GM12878 (cell line): ENCODE measurements at regions of chr5 and their contacts with region 1.

Region 1: DNA sequence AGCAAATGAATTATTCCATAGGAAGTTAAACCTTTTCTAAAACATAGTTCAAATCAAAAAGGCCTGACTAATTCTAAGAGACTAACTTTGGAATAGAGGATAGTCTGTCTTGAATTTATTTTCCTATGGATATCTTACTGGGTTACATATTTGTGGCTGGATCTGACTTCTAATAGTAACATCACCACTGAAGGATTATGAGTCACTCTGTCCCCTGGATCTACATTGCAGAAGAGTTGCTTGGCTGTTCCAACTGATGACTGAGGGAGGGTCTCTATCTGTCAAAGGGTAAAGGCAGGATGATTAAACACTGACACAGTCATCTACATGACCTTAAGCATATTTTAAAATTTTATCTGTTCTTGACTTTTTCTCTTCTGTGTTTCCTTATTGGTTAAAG is 119.6 kb upstream of the FST start:
- DNase-seq: no peak
- ATAC-seq: no peak
- H3K4me3 ChIP-seq: no peak overlapping the region
- H3K27ac ChIP-seq: no peak overlapping the region
- H3K4me1 ChIP-seq: no peaks in the 10 kb centered on the region
- H3K27me3 ChIP-seq: no peaks in the 10 kb centered on the region
- CTCF ChIP-seq: no peak
- EP300 ChIP-seq: no peak
- POLR2A ChIP-seq: no peak
- RAD21 ChIP-seq: no peak

Region 2: DNA sequence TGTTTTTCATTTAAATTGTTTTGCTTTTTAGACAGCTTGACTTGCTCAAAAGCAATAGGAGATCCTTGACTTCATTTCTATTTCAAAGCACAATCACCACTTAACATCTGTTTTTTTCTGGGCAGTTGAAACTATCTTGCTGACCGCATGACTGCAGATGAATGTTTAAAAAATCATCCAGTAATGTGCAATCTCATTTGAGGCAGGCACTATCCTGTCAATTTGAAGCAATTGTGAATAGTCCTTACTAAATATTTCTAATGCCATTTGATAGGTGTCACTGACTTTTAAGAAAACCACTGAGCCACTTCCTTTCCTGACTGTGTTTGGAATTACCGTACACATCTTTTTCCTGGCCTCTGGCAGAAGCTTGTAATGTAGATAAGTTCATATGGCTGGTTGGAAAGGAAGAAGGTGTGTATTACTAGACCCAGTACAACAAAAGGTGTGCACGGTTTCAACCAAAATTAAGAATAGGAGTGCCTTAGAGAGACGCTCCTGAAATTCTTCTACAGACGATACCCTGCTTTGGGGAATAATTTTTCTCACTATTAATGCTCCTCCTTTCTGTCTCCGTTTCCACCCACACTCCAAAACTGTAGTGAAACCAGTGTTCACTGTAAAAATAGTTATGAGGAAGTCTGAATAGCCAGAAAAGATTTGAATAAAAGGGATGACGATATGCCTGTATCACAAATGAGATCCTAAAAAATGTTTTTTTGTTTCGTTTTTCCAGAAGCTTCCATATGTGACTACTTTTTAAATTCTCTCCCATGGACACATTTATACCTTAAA is 114.6 kb before region 1 on chr5:
- CTCF ChIA-PET with region 1: no interaction called
- POLR2A ChIA-PET with region 1: no interaction called
- RAD21 ChIA-PET with region 1: no interaction called
- SMC1A ChIA-PET with region 1: no interaction called
- in situ Hi-C with region 1: no loop called
- intact Hi-C with region 1: no loop called
- DNase-seq: no peak
- ATAC-seq: no peak
- H3K4me3 ChIP-seq: no peak overlapping the region
- H3K27ac ChIP-seq: no peak overlapping the region
- H3K4me1 ChIP-seq: no peaks in the 10 kb centered on the region
- H3K27me3 ChIP-seq: no peaks in the 10 kb centered on the region
- CTCF ChIP-seq: no peak
- EP300 ChIP-seq: no peak
- POLR2A ChIP-seq: no peak
- RAD21 ChIP-seq: no peak

Region 3: GRCh38 chr5:53323943-53324642 is 36.7 kb before region 1 on chr5:
- CTCF ChIA-PET with region 1: interaction called, 3 read pairs
- POLR2A ChIA-PET with region 1: no interaction called
- RAD21 ChIA-PET with region 1: no interaction called
- SMC1A ChIA-PET with region 1: no interaction called
- in situ Hi-C with region 1: no loop called
- intact Hi-C with region 1: loop called (anchors 1 kb)
- DNase-seq: peak; percentile 8
- ATAC-seq: peak; percentile 86
- H3K4me3 ChIP-seq: no peak overlapping the region
- H3K27ac ChIP-seq: no peak overlapping the region
- H3K4me1 ChIP-seq: no peaks in the 10 kb centered on the region
- H3K27me3 ChIP-seq: no peaks in the 10 kb centered on the region
- CTCF ChIP-seq: no peak
- EP300 ChIP-seq: no peak
- POLR2A ChIP-seq: no peak
- RAD21 ChIP-seq: no peak